Activated B cell treated with CpG ODN at 0.5 μM for 24 hours (primary cell): ENCODE measurements at regions of chr2 and their contacts with region 1.

Region 1: GRCh38 chr2:134348239-134348638 is 94.4 kb downstream of the MGAT5 start:
- DNase-seq: no peak
- ATAC-seq: no peak
- H3K4me3 Mint-ChIP-seq: no peak overlapping the region
- H3K27ac Mint-ChIP-seq: peak overlapping the region; percentile 54
- H3K4me1 Mint-ChIP-seq: peaks cover 29% of the 10 kb centered on the region
- H3K27me3 Mint-ChIP-seq: no peaks in the 10 kb centered on the region
- CTCF ChIP-seq: no peak

Region 2: DNA sequence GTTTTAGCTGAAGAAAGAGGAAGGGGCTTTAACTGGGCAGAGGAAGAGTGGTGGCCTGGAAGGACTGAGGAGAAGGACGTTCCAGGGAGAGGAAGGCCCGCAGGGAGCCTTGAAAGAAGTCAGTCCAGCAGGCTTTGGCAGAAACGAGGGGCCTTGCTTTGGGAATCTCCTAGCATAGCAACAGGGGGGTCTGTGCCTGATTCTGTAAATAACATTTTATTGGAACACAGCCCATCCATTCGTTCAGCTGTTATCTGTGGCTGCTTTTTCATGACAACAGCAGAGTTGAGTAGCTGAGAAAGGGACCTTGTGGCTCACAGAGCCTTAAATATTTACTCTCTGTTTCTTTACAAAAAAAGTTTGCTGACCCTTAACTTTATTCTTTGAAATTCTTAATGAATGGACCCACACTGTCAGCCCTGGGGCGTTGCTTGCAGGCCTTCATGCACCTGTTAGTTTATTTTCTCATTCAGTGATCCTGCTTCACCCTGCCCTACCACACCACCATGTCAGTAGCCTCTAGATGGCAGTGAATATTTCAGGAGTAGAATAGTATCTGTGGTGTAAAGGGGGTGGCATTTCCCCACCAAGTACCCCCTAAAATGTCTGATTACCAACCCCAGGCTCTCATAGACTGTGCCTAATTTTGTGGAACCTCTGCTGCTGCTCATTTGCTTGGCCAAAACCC is 33.4 kb before region 1 on chr2:
- CTCF ChIA-PET with region 1: interaction called, 4 read pairs
- POLR2A ChIA-PET with region 1: no interaction called
- intact Hi-C with region 1: loop called (anchors 5 kb)
- DNase-seq: no peak
- ATAC-seq: no peak
- H3K4me3 Mint-ChIP-seq: no peak overlapping the region
- H3K27ac Mint-ChIP-seq: peak overlapping the region; percentile 42
- H3K4me1 Mint-ChIP-seq: peaks cover 89% of the 10 kb centered on the region
- H3K27me3 Mint-ChIP-seq: no peaks in the 10 kb centered on the region
- CTCF ChIP-seq: no peak

Region 3: GRCh38 chr2:134336352-134336751 is 11.9 kb before region 1 on chr2:
- CTCF ChIA-PET with region 1: interaction called, 3 read pairs
- POLR2A ChIA-PET with region 1: interaction called, 9 read pairs
- intact Hi-C with region 1: loop called (anchors 2 kb)
- DNase-seq: no peak
- ATAC-seq: peak; percentile 82
- H3K4me3 Mint-ChIP-seq: peak overlapping the region; percentile 12
- H3K27ac Mint-ChIP-seq: peak overlapping the region; percentile 57
- H3K4me1 Mint-ChIP-seq: peaks cover 64% of the 10 kb centered on the region
- H3K27me3 Mint-ChIP-seq: no peaks in the 10 kb centered on the region
- CTCF ChIP-seq: no peak

Region 4: DNA sequence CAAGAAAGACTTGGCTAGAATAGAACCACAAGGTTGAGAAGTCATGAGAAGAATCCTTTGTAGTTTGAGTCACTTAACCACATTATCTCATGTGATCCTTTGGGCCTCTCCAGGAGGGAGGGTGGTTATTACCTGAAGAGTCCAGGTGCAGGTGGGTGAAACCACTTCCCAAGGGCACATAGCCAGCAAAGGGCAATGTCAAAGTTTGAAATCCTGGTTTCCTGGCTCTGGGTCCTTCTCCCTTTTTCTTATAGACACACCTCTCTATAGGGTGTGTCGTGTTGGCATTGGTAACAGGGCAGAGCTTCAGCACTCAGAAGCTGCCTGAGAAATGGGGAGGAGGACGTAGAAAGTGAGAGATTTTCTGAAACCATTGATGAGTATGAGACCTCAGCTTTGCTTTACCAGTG is 43.5 kb after region 1 on chr2:
- CTCF ChIA-PET with region 1: no interaction called
- POLR2A ChIA-PET with region 1: no interaction called
- intact Hi-C with region 1: loop called (anchors 10 kb)
- DNase-seq: no peak
- ATAC-seq: peak; percentile 40
- H3K4me3 Mint-ChIP-seq: peak overlapping the region; percentile 26
- H3K27ac Mint-ChIP-seq: peak overlapping the region; percentile 76
- H3K4me1 Mint-ChIP-seq: peaks cover 36% of the 10 kb centered on the region
- H3K27me3 Mint-ChIP-seq: no peaks in the 10 kb centered on the region
- CTCF ChIP-seq: no peak